ENCODE measurements at regions of chr12 and their contacts with region 1.

Region 1: GRCh38 chr12:332581-333205 is 56.4 kb downstream of the KDM5A start:
- DNase-seq: no peak
- ATAC-seq: no peak
- H3K4me3 ChIP-seq: no peak overlapping the region
- H3K27ac ChIP-seq: no peak overlapping the region
- H3K4me1 ChIP-seq: no peaks in the 10 kb centered on the region
- H3K27me3 ChIP-seq: no peaks in the 10 kb centered on the region
- CTCF ChIP-seq: no peak
- POLR2A ChIP-seq: no peak
- RAD21 ChIP-seq: no peak

Region 2: GRCh38 chr12:292186-292585 is 40.5 kb before region 1 on chr12:
- CTCF ChIA-PET with region 1: no interaction called
- POLR2A ChIA-PET with region 1: no interaction called
- dilution Hi-C with region 1: no loop called
- in situ Hi-C with region 1: no loop called
- intact Hi-C with region 1: loop called (anchors 5 kb)
- DNase-seq: peak; percentile 51
- ATAC-seq: peak; percentile 35; the same call in 1 of the 2 replicates
- H3K4me3 ChIP-seq: no peak overlapping the region
- H3K27ac ChIP-seq: no peak overlapping the region
- H3K4me1 ChIP-seq: peaks cover 2% of the 10 kb centered on the region
- H3K27me3 ChIP-seq: no peaks in the 10 kb centered on the region
- CTCF ChIP-seq: no peak
- POLR2A ChIP-seq: no peak
- RAD21 ChIP-seq: no peak